PC-9 (cell line): ENCODE measurements at regions of chr3 and their contacts with region 1.

Region 1: GRCh38 chr3:97971677-97972567 is at the start of gene RIOX2:
- DNase-seq: peak; percentile 86 to 99
- H3K4me3 ChIP-seq: peak within 1 kb of the TSS; percentile 71
- H3K27ac ChIP-seq: peak within 1 kb of the TSS; percentile 67
- H3K4me1 ChIP-seq: peaks cover 33% of the 10 kb centered on the region
- H3K27me3 ChIP-seq: no peaks in the 10 kb centered on the region
- CTCF ChIP-seq: no peak
- total RNA-seq, gene RIOX2: 28.3 and 33.1 TPM in 2 replicates

Region 2: GRCh38 chr3:97764407-97765238 is 207.3 kb before region 1 on chr3 and contains the start of gene ARL6:
- CTCF ChIA-PET with region 1: no interaction called
- POLR2A ChIA-PET with region 1: no interaction called
- intact Hi-C with region 1: loop called (anchors 1 kb)
- DNase-seq: peak; percentile 85 to 89
- H3K4me3 ChIP-seq: peak within 1 kb of the TSS; percentile 69
- H3K27ac ChIP-seq: peak within 1 kb of the TSS; percentile 28
- H3K4me1 ChIP-seq: peaks cover 22% of the 10 kb centered on the region
- H3K27me3 ChIP-seq: no peaks in the 10 kb centered on the region
- CTCF ChIP-seq: no peak; the same call in 1 of the 2 replicates
- total RNA-seq, gene ARL6: 10.6 and 14.6 TPM in 2 replicates

Region 3: GRCh38 chr3:97821810-97822775 is 149.8 kb before region 1 on chr3 and contains the start of gene CRYBG3:
- CTCF ChIA-PET with region 1: interaction called, 3 read pairs
- POLR2A ChIA-PET with region 1: interaction called, 3 read pairs
- intact Hi-C with region 1: loop called (anchors 2 kb)
- DNase-seq: peak; percentile 77 to 92
- H3K4me3 ChIP-seq: peak within 1 kb of the TSS; percentile 71
- H3K27ac ChIP-seq: peak within 1 kb of the TSS; percentile 36
- H3K4me1 ChIP-seq: peaks cover 19% of the 10 kb centered on the region
- H3K27me3 ChIP-seq: no peaks in the 10 kb centered on the region
- CTCF ChIP-seq: peak; percentile 60
- total RNA-seq, gene CRYBG3: 15.5 and 17.2 TPM in 2 replicates

Region 4: DNA sequence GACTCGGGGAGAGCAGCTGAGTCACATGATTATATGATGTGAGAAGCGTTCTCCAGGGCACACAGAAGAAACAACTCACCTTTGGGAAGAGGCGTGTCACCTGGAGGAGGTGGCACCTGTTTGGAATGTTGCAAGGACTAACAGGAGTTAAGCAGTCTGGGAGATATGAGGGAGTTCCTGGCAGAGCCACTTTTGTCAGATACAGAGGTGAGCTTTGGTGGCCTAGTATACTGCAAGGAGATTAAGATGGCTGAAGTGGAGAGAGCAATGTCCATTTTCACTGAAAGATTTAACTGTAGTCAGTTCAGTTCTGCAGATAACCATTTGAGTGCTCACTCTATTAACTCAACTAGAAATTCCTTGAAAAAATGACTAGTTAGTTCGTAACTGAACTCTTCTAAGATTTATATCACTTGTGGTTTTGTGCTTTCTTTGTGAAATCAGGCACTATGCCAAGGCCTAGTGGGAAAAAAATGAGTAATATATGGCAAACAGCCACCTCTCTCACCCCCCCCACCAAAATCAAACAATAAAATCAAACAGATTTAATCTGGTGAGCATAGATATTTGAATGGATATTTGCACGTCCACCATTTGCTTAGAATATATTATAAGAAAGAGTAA is 88.8 kb before region 1 on chr3:
- CTCF ChIA-PET with region 1: no interaction called
- POLR2A ChIA-PET with region 1: no interaction called
- intact Hi-C with region 1: loop called (anchors 2 kb)
- DNase-seq: peak; percentile 74 to 91
- H3K4me3 ChIP-seq: peak overlapping the region; percentile 20; the same call in 1 of the 2 replicates
- H3K27ac ChIP-seq: peak overlapping the region; percentile 64
- H3K4me1 ChIP-seq: peaks cover 24% of the 10 kb centered on the region
- H3K27me3 ChIP-seq: no peaks in the 10 kb centered on the region
- CTCF ChIP-seq: no peak

Region 5: GRCh38 chr3:97940034-97940433 is 31.9 kb before region 1 on chr3:
- CTCF ChIA-PET with region 1: no interaction called
- POLR2A ChIA-PET with region 1: no interaction called
- intact Hi-C with region 1: no loop called
- DNase-seq: no peak
- H3K4me3 ChIP-seq: no peak overlapping the region
- H3K27ac ChIP-seq: no peak overlapping the region
- H3K4me1 ChIP-seq: no peaks in the 10 kb centered on the region
- H3K27me3 ChIP-seq: no peaks in the 10 kb centered on the region
- CTCF ChIP-seq: 0 out of 2 replicates have a peak, but pooled peaks have one; percentile 31

Region 6: DNA sequence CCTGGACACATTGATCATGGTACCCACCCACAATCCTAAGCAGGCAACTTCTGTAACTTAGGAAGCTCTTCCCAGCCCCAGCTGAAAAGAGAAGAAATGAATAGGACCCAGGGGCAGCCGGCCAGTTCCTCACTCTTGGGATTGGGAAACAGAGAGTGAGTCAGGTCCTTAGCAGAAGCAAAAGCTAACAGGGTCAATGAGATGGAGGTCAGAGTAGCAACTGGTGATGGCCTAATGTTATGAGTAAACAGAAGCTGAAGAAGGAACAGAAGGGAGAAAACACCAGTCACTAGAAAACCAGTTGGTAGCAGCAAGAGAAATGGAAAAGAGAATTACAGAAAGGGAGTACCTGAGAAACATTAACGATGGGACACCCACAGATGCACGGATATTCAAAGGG is 19.6 kb before region 1 on chr3:
- CTCF ChIA-PET with region 1: no interaction called
- POLR2A ChIA-PET with region 1: interaction called, 7 read pairs
- intact Hi-C with region 1: loop called (anchors 1 kb)
- DNase-seq: peak; percentile 26 to 93
- H3K4me3 ChIP-seq: peak overlapping the region; percentile 36
- H3K27ac ChIP-seq: peak overlapping the region; percentile 91
- H3K4me1 ChIP-seq: peaks cover 43% of the 10 kb centered on the region
- H3K27me3 ChIP-seq: no peaks in the 10 kb centered on the region
- CTCF ChIP-seq: no peak

Region 7: DNA sequence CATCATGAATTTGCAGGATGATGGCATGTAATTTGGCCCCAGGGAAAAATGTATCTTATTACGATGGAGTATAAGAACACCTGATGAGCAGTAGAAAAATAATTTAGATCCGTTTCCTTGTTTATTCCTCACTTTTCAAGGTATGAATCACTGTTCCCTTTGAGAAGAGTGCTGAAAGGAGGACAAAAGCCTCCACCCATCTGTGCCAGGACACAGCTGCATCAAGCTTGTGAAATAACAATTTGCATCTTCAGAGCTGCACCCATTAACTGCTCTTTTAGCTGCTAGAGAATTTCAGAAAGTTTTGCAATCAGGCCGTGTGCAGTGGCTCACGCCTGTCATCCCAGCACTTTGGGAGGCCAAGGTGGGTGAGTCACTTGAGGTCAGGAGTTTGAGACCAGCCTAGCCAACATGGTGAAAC is 541.2 kb after region 1 on chr3:
- CTCF ChIA-PET with region 1: no interaction called
- POLR2A ChIA-PET with region 1: no interaction called
- intact Hi-C with region 1: loop called (anchors 10 kb)
- DNase-seq: peak; percentile 81 to 100
- H3K4me3 ChIP-seq: 0 out of 2 replicates have a peak overlapping the region, but pooled peaks have one; percentile 19
- H3K27ac ChIP-seq: peak overlapping the region; percentile 87
- H3K4me1 ChIP-seq: peaks cover 50% of the 10 kb centered on the region
- H3K27me3 ChIP-seq: no peaks in the 10 kb centered on the region
- CTCF ChIP-seq: no peak